Motor neuron (in vitro differentiated cells): ENCODE measurements at regions of chr4 and their contacts with region 1.

Region 1: GRCh38 chr4:162163852-162164759 is at the start of gene FSTL5:
- ATAC-seq: peak; percentile 76 to 98 (median 97)
- H3K4me3 ChIP-seq: peak within 1 kb of the TSS; percentile 48 to 69 (median 53)
- H3K27ac ChIP-seq: no peak within 1 kb of the TSS
- H3K4me1 ChIP-seq: peaks cover 0 to 8% of the 10 kb centered on the region in 2 donors
- total RNA-seq, gene FSTL5: 0.17 to 31.3 (median 3.0) TPM

Region 2: GRCh38 chr4:161252520-161253141 is 911.5 kb before region 1 on chr4:
- in situ Hi-C with region 1: loop called in 1 of 9 experiments (anchors 25 kb)
- ATAC-seq: peak in 2 of 8 experiments; percentile 43 to 46
- H3K4me3 ChIP-seq: no peak overlapping the region
- H3K27ac ChIP-seq: no peak overlapping the region
- H3K4me1 ChIP-seq: no peaks in the 10 kb centered on the region

Region 3: DNA sequence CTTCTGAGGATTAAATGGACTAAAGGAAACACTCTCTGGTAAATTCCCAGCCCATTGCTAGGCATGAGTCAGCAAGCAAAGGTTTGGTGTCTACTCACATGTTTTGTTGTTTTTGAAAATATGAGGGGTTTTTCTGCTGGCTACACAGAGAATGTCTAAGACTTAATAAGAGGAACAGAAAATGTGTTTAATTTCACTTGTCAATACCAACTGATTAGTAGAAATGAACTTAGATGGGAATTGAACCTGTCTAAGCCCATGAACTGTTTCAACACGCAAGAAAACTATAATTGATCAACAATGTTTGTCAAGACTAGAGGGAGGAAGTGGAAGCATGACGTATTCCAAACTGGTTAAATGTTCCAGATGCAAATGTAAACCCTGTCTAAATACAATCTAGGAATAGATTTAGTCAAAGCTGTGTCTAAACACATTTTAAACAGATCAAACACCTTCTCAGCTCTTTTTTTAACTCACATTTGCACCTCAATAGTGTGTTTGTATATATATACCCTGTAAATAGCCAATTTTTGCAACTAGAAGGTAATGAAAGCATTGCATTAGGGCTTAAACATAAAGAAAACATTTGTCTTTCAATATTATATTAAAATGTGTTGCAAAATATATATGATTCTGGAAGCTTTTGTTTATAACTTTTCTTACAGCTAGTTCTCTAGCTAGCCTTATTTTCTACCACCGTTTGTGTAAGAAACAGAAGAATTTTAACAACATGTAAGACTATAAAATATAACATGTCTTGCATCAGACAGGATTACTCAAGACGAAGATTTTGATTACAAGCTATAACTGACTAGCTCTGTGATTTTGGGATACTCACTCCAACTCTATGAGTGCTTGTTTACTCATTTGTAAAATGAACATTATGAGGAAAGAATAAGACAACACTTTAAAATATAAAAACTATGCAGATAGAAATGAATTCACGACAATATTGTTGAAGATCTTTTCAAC is 608.1 kb before region 1 on chr4:
- in situ Hi-C with region 1: loop called in 2 of 9 experiments (anchors 25 kb)
- ATAC-seq: peak in 1 of 8 experiments; percentile 43
- H3K4me3 ChIP-seq: no peak overlapping the region
- H3K27ac ChIP-seq: no peak overlapping the region
- H3K4me1 ChIP-seq: no peaks in the 10 kb centered on the region